ENCODE measurements at regions of chr5 and their contacts with region 1.

Region 1: GRCh38 chr5:14298126-14298847 is 155.1 kb downstream of the TRIO start:
- DNase-seq: no peak
- ATAC-seq: peak; percentile 46 to 67 (median 55)
- H3K4me3 ChIP-seq: no peak overlapping the region
- H3K27ac ChIP-seq: peak overlapping the region; percentile 72
- H3K4me1 ChIP-seq: peaks cover 68% of the 10 kb centered on the region
- H3K27me3 ChIP-seq: no peaks in the 10 kb centered on the region
- CTCF ChIP-seq: no peak

Region 2: DNA sequence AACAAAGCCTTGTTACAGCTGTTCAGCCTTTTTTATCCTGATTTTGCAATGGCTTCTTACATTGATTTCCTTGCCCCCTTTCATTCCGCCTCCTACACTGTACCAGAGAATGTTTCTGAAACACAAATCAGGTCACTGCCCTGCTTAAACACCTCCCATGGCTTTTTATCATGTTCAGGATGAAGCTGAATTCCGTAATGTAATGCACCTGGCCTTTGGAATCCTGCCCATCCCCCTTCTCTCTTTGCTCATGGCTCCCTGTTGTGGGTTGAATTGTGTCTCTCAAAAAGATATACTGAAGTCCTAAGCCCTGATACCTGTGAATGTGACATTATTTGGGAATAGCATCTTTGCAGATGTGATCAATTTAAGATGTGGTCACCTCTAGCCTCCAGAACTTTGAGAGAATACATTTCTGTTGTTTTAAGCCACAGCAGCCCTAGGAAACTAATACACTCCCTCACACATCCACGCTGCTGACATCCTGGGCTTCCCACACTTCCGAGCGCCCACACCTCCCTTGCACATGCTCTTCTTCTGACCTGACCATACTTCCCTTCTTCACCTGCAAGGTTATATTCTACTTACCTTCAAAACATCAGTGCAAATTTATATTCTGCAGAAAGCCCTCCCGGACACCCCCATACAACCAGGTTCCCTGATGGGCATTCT is 455.0 kb before region 1 on chr5:
- intact Hi-C with region 1: no loop called
- DNase-seq: no peak
- ATAC-seq: no peak
- H3K4me3 ChIP-seq: no peak overlapping the region
- H3K27ac ChIP-seq: no peak overlapping the region
- H3K4me1 ChIP-seq: no peaks in the 10 kb centered on the region
- H3K27me3 ChIP-seq: no peaks in the 10 kb centered on the region
- CTCF ChIP-seq: no peak

Region 3: DNA sequence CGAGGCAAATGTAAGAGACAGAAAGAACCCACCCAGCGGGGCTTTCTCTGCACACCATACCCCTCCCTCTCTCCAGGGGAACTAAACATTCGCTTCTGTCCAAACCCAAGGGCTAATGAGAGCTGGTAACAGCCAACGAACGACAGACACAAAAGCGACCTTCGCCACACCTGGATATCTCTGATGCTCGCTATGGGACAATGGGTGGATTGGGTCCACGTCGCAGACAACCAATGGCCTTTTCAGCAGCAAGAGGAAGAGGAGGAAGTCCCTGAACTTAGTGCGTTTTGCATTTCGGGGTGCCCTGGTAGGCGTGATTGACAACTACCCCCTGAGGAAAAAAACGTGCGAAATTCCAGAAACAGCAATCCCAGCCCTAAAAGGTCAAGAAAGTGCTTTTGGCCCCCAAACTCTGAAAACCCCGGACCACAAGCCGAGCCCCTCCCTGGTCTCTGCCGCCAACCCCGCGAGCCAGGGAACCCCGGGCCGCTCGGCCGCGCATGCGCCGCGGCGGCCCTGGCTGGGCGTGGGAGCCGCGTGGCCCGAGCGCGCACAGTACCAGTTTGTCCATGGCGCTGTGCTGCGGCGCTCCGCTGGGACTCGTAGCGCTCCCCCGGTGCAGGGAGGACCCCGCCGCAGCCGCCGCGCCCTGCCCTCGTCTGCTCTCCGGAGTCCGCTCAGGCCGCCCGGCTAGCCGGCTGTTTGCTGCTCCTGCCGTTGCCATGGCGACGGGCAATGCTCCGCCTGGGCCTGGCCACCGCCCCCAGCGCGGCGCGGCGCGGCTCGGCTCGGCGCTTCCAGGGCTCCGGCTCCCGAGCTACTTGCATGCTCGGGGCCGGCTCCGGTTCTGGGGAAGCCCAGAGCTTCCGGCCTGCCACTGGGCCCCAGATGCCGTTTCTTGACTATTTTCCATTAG is 286.9 kb before region 1 on chr5:
- intact Hi-C with region 1: loop called in 1 of 2 experiments (anchors 10 kb)
- DNase-seq: peak; percentile 88 to 92
- ATAC-seq: peak; percentile 94 to 96 (median 94)
- H3K4me3 ChIP-seq: peak overlapping the region; percentile 83
- H3K27ac ChIP-seq: peak overlapping the region; percentile 74
- H3K4me1 ChIP-seq: peaks cover 11% of the 10 kb centered on the region
- H3K27me3 ChIP-seq: no peaks in the 10 kb centered on the region
- CTCF ChIP-seq: peak; percentile 5

Region 4: GRCh38 chr5:14364576-14365472 is 66.5 kb after region 1 on chr5:
- intact Hi-C with region 1: no loop called
- DNase-seq: no peak
- ATAC-seq: peak in 1 of 4 donors; percentile 50
- H3K4me3 ChIP-seq: no peak overlapping the region
- H3K27ac ChIP-seq: no peak overlapping the region
- H3K4me1 ChIP-seq: no peaks in the 10 kb centered on the region
- H3K27me3 ChIP-seq: no peaks in the 10 kb centered on the region
- CTCF ChIP-seq: peak; percentile 45

Measured in psoas muscle (tissue), 8 donors.